PC-9 (cell line): ENCODE measurements at regions of chr6 and their contacts with region 1.

Region 1: GRCh38 chr6:100065348-100065747 is 71.3 kb upstream of the MCHR2 start:
- DNase-seq: no peak
- H3K4me3 ChIP-seq: no peak overlapping the region
- H3K27ac ChIP-seq: no peak overlapping the region
- H3K4me1 ChIP-seq: no peaks in the 10 kb centered on the region
- H3K27me3 ChIP-seq: no peaks in the 10 kb centered on the region
- CTCF ChIP-seq: no peak

Region 2: DNA sequence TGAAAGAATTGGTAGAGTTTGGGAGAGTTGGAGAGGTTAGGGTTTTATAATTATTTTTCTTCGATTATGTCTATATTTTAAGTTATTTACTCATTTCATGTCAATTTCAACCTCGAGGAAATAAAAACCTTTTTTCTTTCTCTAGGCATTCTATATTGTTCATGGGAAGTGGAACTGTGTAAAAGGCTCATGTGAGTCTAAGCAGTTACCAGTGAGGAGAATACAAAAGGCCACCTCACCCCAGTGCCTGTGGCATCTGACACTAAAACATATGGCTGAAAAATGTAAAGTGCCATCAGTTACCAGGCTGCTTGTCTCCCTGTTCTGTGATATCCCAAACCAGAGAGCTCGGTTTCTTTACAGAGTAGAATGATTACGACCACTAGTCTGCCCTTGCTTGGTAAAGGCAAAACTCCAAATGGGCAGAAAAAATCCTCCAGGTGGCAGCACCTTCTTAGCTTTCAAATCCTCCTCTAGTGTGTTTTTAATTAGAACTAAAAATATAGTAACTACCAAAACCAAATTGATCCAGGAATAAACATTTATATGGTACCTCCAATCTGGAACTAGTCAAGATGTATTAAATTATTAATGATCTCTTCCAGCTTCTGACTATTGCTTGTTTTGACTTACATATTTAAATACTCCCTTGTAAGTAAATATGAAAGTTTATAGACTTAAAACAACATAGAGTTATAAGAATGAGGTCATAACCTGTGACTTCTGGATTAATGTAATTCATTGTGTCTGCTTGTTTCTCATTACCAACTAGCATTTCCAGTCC is 51.3 kb after region 1 on chr6:
- CTCF ChIA-PET with region 1: no interaction called
- POLR2A ChIA-PET with region 1: no interaction called
- intact Hi-C with region 1: no loop called
- DNase-seq: peak; percentile 53 to 59
- H3K4me3 ChIP-seq: no peak overlapping the region
- H3K27ac ChIP-seq: no peak overlapping the region
- H3K4me1 ChIP-seq: peaks cover 5% of the 10 kb centered on the region
- H3K27me3 ChIP-seq: no peaks in the 10 kb centered on the region
- CTCF ChIP-seq: peak; percentile 88

Region 3: DNA sequence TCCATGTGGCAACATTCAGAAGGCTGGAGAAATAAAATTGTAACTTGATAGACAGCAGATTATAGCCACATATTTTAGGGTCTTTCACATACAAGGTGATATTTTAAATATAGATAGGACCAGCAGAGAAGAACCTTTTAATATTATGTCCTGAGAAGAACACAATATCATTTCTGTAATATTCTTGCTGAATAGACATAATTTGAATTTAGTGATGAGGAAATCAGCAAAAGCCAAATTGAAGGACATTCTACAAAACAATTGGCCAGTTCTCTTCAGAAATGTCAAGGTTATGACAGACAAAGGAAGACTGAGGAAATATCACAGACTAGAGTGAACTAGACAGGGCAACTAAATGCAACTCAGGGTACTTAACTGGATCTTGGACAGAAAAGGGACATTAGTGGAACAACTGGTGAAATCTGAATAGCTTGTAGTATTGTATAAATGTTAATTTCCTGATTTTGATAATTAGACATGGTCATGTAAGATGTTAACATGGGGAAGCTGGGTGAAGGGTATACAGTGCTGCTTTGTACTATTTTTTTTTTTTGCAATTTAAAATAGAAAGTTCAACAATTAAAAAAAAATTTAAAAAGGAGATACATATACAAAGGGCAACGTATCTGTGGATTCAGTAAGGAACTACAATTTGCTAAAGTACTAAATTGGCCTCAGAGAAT is 533.9 kb after region 1 on chr6:
- CTCF ChIA-PET with region 1: interaction called, 10 read pairs
- POLR2A ChIA-PET with region 1: no interaction called
- intact Hi-C with region 1: no loop called
- DNase-seq: no peak
- H3K4me3 ChIP-seq: no peak overlapping the region
- H3K27ac ChIP-seq: no peak overlapping the region
- H3K4me1 ChIP-seq: no peaks in the 10 kb centered on the region
- H3K27me3 ChIP-seq: no peaks in the 10 kb centered on the region
- CTCF ChIP-seq: no peak